Activated CD4-positive, alpha-beta T cell treated with anti-CD3 and anti-CD28 coated beads, Interleukin-2, amount 10 ng/mL, durations not matched to agents 24 days and 14 days (primary cell): ENCODE measurements at regions of chr4 and their contacts with region 1.

Region 1: GRCh38 chr4:1726146-1726934 is 5.0 kb downstream of the TACC3 start:
- DNase-seq: peak; percentile 97
- H3K4me3 Mint-ChIP-seq: no peak overlapping the region
- H3K27ac Mint-ChIP-seq: peak overlapping the region; percentile 68
- H3K4me1 Mint-ChIP-seq: peaks cover 51% of the 10 kb centered on the region
- H3K27me3 Mint-ChIP-seq: no peaks in the 10 kb centered on the region

Region 2: DNA sequence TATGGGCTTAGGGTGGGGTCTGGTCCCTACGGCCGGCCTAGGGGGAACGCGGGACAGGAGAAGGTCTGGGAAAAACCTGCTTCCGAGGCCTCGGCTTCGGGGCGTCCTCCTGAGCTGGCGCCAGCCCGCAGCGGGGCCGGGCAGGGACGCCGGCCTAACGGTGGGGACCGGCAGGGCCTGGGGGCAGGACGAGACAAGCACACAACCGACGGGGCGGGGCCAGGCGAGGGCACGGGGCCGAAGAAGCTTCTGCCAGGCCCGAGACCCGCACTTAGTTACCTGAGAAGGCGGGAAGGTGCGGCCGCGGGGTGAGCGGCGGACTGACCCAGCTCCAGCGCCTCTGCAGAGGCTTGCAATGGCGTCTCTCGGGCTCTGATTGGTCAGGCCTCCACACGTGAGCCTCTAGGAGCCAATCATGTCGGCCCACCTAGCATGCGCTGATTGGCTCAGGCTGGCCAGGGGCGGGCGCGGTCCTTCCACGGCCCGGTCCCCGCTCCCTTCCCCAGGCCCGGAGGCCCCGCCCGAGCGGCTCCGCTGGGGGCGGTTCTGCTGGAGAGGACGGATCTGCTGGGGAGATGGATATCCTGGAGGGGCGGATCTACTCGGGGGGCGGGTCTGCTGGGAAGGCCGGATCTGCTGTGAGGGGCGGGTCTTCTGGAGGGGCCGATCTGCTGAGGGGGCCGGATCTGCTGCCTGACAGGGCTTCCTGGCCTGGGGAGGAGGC is 944.7 kb before region 1 on chr4:
- intact Hi-C with region 1: no loop called
- DNase-seq: peak; percentile 100
- H3K4me3 Mint-ChIP-seq: peak overlapping the region; percentile 88
- H3K27ac Mint-ChIP-seq: peak overlapping the region; percentile 95
- H3K4me1 Mint-ChIP-seq: peaks cover 41% of the 10 kb centered on the region
- H3K27me3 Mint-ChIP-seq: peaks cover 15% of the 10 kb centered on the region

Region 3: DNA sequence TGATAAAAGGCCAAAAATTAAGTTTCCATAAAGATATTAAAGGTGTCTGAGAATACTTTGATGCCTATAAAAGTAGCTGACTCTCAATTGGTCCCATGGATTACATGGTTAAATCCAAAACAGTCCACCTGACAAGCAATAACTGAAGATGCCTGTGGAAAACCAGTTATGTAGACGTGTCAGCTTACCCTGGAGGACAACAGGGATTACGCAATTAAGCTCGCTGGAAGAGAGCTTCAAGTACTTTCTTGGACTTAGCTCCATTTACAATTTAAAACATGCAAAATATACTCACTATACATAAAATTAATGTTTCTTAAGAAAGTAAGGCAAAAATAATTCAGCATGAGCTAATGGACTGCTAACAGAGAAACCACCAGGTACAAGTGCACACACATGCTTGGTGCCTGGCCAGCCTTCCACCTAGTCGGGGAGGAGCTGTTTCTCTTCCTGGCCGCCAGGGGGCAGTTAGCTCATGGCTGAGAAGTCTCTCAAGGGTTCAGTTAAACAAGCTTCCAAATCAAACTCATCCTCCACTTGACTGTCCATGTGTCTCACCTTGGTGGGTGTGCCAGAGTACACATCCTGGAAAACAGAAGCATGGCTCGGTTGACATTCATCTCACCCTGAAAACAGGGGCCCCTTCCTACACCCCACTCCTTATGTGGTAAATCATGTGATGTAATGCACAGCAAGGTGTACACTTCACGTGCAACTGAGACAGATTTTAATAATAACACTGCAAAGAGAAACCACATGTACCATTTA is 33.0 kb before region 1 on chr4:
- intact Hi-C with region 1: loop called (anchors 1 kb)
- DNase-seq: peak; percentile 93
- H3K4me3 Mint-ChIP-seq: no peak overlapping the region
- H3K27ac Mint-ChIP-seq: peak overlapping the region; percentile 39
- H3K4me1 Mint-ChIP-seq: peaks cover 7% of the 10 kb centered on the region
- H3K27me3 Mint-ChIP-seq: no peaks in the 10 kb centered on the region

Region 4: GRCh38 chr4:1809754-1810511 is 83.6 kb after region 1 on chr4:
- intact Hi-C with region 1: no loop called
- DNase-seq: peak; percentile 92
- H3K4me3 Mint-ChIP-seq: no peak overlapping the region
- H3K27ac Mint-ChIP-seq: no peak overlapping the region
- H3K4me1 Mint-ChIP-seq: no peaks in the 10 kb centered on the region
- H3K27me3 Mint-ChIP-seq: no peaks in the 10 kb centered on the region